ENCODE measurements at regions of chr17 and their contacts with region 1.

Region 1: DNA sequence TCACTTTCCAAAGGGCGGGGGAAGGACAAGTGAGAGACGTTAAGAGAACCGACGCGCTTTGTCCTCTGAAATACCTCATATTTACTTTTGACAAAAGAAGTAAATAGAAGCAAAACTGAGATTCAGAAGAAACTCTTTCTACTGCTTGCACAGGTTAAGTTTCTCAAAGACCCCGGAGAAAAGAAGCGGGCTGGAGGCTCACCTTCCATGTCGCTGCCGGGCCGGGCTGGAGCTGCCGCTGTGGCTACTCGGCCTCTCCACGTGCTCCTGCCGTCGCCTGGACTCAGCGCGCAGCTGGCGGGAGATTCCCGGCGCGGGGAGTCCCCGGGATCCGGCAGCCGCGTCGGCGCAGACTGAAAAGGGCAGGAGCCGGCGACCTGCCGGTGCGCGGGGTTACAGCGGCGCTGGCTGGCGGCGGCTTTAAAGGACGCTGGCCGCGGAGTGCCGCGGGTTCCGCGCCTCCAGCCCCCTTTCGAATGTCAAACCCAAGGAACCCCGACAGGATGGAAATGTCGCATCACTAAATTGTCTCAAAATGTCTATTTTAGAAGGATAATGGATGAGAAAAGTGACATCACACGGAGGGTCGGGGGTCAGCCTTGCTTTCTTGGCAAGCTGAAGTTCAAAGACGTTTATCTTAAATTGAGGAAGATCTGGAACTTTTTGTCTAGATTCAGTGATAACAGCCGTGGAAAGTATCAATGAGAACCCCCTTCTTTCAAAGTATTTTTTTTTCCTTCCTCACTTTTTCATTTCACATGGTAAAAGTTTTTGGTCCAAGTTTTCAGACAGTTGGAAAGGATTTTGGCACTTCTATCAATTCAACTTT is at the start of gene IKZF3:
- DNase-seq: peak; percentile 82
- H3K4me3 ChIP-seq: peak within 1 kb of the TSS; percentile 85
- H3K27ac ChIP-seq: peak within 1 kb of the TSS; percentile 89
- H3K4me1 ChIP-seq: peaks cover 50% of the 10 kb centered on the region
- CTCF ChIP-seq: peak; percentile 69
- total RNA-seq, gene IKZF3: 44.7 and 54.7 TPM in 2 replicates

Region 2: DNA sequence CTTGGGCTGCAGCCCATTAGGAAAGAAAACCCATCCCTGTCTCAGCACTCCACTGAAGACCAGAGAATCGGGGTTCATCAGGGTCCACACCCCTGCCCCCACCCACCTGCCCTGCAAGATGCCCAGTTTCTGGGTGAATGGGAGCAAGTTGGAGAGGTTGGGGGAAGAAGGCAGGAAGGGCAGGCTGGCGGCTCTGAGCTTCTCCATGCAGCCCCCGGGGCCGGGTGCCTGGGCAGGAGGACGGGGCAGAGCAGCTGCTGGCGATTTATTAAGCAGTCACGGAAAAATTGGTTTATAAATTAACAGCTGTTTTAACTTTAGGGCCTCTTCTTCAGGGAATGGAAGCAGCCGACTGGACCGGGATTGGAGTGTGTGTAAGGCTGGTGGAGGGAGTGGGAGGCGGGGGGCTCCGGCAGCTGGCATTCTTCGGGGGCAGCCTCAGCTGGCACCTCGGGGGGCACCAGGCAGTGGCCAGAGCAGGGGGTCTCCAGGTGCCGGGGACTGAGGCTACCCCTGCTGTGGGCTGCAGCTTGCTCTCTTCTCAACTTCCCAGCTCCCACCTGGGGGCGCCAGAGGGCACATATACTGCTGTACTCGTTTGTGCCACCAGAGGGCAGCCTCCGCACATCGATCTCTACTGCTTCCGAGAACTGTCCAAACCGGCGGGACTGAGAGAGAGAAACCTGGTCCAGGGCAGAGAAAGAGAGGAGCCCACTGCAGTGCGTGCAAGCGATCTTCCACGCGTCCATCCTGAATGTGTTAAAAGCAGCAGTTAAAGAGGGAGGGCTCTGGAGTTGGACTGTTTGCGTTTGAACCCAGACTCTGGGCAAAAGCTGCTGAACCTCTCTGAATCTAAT is 242.4 kb before region 1 on chr17:
- CTCF ChIA-PET with region 1: no interaction called
- POLR2A ChIA-PET with region 1: no interaction called
- intact Hi-C with region 1: loop called (anchors 5 kb)
- DNase-seq: peak; percentile 87
- H3K4me3 ChIP-seq: peak overlapping the region; percentile 36
- H3K27ac ChIP-seq: peak overlapping the region; percentile 53
- H3K4me1 ChIP-seq: peaks cover 37% of the 10 kb centered on the region
- CTCF ChIP-seq: peak; percentile 100

Region 3: DNA sequence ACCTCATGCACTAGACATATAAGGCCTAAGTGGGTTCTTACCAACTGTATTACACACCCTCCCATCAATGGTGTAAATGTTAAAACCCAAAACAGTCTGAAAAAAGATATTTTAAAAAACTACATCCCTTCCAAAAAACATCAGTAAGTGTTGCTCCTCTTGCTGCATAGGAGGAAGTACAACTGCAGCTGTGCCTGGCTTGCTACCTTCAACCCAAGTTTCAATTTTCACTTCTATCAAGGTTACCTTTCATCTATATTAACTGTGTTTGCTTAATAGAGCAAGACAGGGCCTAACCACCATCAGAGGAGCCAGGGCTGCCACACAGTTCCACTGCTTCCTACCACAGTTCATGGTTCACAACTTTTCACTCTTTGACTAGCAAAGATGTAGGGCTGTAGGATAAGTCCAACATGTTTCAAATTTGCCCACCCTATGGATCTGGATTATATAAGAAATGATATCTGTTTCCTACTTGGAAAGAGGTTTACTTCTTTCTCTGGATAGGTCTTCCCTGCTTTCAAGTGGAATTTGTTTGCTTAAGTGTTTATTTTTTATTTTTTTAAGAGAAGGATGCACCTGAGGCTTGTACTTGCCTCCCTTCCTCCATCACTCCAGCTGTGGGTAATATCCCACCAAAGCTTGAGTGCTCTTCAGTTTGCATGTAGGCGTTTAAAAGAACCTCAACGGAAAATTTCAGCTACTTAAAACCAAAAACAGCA is 69.7 kb before region 1 on chr17:
- CTCF ChIA-PET with region 1: no interaction called
- POLR2A ChIA-PET with region 1: interaction called, 56 read pairs
- intact Hi-C with region 1: loop called (anchors 1 kb)
- DNase-seq: peak; percentile 97
- H3K4me3 ChIP-seq: peak overlapping the region; percentile 54
- H3K27ac ChIP-seq: peak overlapping the region; percentile 99
- H3K4me1 ChIP-seq: peaks cover 96% of the 10 kb centered on the region
- CTCF ChIP-seq: no peak

Region 4: GRCh38 chr17:39845052-39845846 is 18.9 kb before region 1 on chr17:
- CTCF ChIA-PET with region 1: interaction called, 3 read pairs
- POLR2A ChIA-PET with region 1: interaction called, 20 read pairs
- intact Hi-C with region 1: no loop called
- DNase-seq: no peak
- H3K4me3 ChIP-seq: no peak overlapping the region
- H3K27ac ChIP-seq: no peak overlapping the region
- H3K4me1 ChIP-seq: peaks cover 76% of the 10 kb centered on the region
- CTCF ChIP-seq: no peak

Region 5: GRCh38 chr17:39927101-39927928 is 63.2 kb after region 1 on chr17 and contains the starts of genes LRRC3C and ORMDL3:
- CTCF ChIA-PET with region 1: no interaction called
- POLR2A ChIA-PET with region 1: no interaction called
- intact Hi-C with region 1: loop called (anchors 2 kb)
- DNase-seq: peak; percentile 93
- H3K4me3 ChIP-seq: peak within 1 kb of the TSS; percentile 91
- H3K27ac ChIP-seq: peak within 1 kb of the TSS; percentile 65
- H3K4me1 ChIP-seq: peaks cover 40% of the 10 kb centered on the region
- CTCF ChIP-seq: no peak
- total RNA-seq, gene LRRC3C: not detected in 2 replicates
- total RNA-seq, gene ORMDL3: 62.2 and 62.6 TPM in 2 replicates

Region 6: DNA sequence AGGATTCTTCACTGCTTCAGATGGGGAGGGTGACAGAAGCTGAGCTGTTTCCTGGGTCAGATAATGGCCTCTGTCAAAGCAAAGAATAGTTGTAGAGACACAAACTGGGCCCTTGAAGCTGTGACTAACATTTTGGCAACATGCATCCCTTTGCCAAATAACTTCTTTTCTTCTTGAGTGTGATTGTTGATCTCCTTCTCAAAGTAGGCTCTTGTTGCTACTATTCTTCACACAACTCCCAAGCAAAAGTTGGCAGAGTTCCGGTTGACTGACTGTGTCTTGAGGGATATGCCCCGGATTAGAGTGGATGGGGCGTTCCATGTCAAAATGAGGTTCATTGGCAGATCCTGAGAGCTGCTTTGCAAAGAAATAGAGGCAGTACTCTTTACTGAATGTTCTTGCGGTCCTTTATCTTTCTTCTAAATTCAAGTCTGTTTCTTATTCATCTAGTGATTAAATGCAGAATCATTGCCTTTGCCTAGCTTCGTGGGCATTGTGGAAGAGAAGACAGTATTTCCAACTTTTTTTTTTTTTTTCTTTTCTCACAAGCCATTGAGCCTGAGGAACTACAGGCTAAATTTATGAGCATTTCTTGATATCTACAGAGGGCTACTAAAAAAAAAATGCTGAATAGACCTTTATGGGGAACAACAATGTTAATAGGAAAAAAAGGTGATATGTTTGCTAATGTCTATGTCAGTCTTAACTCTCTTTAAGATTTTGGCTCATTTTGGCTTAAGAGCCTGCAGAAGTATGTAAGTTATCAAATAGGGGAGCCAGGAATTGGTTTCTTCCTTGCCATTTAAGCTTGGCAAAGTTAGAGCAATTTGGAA is 360.8 kb after region 1 on chr17:
- CTCF ChIA-PET with region 1: no interaction called
- POLR2A ChIA-PET with region 1: no interaction called
- intact Hi-C with region 1: no loop called
- DNase-seq: no peak
- H3K4me3 ChIP-seq: no peak overlapping the region
- H3K27ac ChIP-seq: no peak overlapping the region
- H3K4me1 ChIP-seq: peaks cover 6% of the 10 kb centered on the region
- CTCF ChIP-seq: no peak

Measured in OCI-LY7 (cell line).